ENCODE measurements at regions of chr16 and their contacts with region 1.

Region 1: GRCh38 chr16:87203060-87203656 is 114.0 kb downstream of the C16orf95 start:
- DNase-seq: peak; percentile 53 to 63 (median 55)
- H3K4me3 ChIP-seq: no peak overlapping the region
- H3K27ac ChIP-seq: no peak overlapping the region
- H3K4me1 ChIP-seq: peaks cover 0 to 3% (median 1%) of the 10 kb centered on the region in 4 experiments
- H3K27me3 ChIP-seq: no peaks in the 10 kb centered on the region

Region 2: GRCh38 chr16:87190288-87191230 is 12.6 kb before region 1 on chr16:
- CTCF ChIA-PET with region 1: interaction called, 13 read pairs
- POLR2A ChIA-PET with region 1: no interaction called
- DNase-seq: no peak
- H3K4me3 ChIP-seq: no peak overlapping the region
- H3K27ac ChIP-seq: no peak overlapping the region
- H3K4me1 ChIP-seq: peaks cover 0 to 2% (median 0%) of the 10 kb centered on the region in 4 experiments
- H3K27me3 ChIP-seq: no peaks in the 10 kb centered on the region

Region 3: GRCh38 chr16:87233926-87234325 is 30.8 kb after region 1 on chr16:
- CTCF ChIA-PET with region 1: interaction called, 21 read pairs
- POLR2A ChIA-PET with region 1: interaction called, 3 read pairs
- DNase-seq: peak; percentile 28 to 43 (median 32)
- H3K4me3 ChIP-seq: no peak overlapping the region
- H3K27ac ChIP-seq: no peak overlapping the region
- H3K4me1 ChIP-seq: peaks cover 10 to 48% (median 37%) of the 10 kb centered on the region in 4 experiments
- H3K27me3 ChIP-seq: no peaks in the 10 kb centered on the region

Region 4: DNA sequence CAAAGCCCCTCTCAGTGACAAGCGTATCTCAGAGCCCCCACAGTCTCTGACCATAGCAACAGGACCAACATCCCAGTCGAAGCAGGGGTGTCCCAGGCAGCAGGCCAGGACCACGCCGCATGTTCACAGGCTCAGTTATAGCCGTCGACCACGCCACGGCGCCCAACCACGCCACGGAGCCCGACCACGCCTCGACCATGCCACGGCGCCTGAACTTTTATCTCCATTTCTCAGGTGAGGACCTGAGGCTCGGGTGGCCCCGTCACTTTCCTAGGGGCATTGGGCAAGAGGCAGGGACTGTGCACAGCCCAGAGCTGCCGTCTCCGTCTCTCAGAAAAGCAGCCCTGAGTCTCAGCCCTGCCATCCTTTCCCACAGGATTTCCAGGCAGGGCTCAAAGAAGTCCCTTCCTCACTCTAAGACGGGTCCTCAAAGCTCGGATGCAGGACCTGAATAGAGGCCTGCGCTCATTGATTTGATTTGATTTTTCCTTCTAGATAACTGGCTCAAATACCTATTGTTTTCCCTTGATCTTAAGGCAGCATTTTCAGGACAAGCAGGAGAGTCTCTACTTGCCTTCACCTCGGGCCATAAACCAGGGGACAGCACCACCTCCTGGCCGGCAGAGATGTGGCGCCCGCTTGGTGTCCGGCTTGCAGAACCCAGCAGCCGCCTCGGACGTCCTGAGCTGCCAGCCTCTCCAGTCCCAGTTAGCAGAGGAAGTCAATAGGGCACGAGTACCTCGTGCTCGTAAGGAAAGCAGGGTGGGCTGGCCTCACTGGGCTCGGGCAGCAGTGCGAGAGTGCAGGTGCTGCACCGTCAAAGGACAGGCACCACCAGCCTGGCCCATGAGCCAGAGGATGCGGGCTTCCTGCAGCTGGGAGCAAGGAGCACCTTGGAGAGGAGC is 75.3 kb after region 1 on chr16:
- CTCF ChIA-PET with region 1: interaction called, 55 read pairs
- POLR2A ChIA-PET with region 1: no interaction called
- DNase-seq: peak; percentile 68 to 75 (median 70)
- H3K4me3 ChIP-seq: no peak overlapping the region
- H3K27ac ChIP-seq: no peak overlapping the region
- H3K4me1 ChIP-seq: peaks cover 3 to 17% (median 14%) of the 10 kb centered on the region in 4 experiments
- H3K27me3 ChIP-seq: peaks cover 0 to 10% (median 0%) of the 10 kb centered on the region in 5 experiments